ENCODE measurements at regions of chr7 and their contacts with region 1.

Region 1: GRCh38 chr7:74026903-74027551 is 946 bp upstream of the ELN start:
- DNase-seq: peak; percentile 69
- ATAC-seq: peak; percentile 78
- H3K4me3 ChIP-seq: no peak overlapping the region
- H3K4me3 Mint-ChIP-seq: no peak overlapping the region
- H3K27ac ChIP-seq: no peak overlapping the region
- H3K27ac Mint-ChIP-seq: no peak overlapping the region
- H3K4me1 ChIP-seq: peaks cover 11 to 13% of the 10 kb centered on the region in 2 donors
- H3K4me1 Mint-ChIP-seq: peaks cover 7% of the 10 kb centered on the region
- H3K27me3 ChIP-seq: peaks cover 0 to 62% (median 23%) of the 10 kb centered on the region in 4 experiments
- H3K27me3 Mint-ChIP-seq: peaks cover 53% of the 10 kb centered on the region
- CTCF ChIP-seq: peak; percentile 93

Region 2: GRCh38 chr7:73865738-73866445 is 161.1 kb before region 1 on chr7:
- CTCF ChIA-PET with region 1: interaction called, 11 read pairs
- POLR2A ChIA-PET with region 1: no interaction called
- intact Hi-C with region 1: loop called (anchors 2 kb)
- DNase-seq: peak; percentile 34
- ATAC-seq: no peak
- H3K4me3 ChIP-seq: no peak overlapping the region
- H3K4me3 Mint-ChIP-seq: no peak overlapping the region
- H3K27ac ChIP-seq: no peak overlapping the region
- H3K27ac Mint-ChIP-seq: no peak overlapping the region
- H3K4me1 ChIP-seq: no peaks in the 10 kb centered on the region
- H3K4me1 Mint-ChIP-seq: no peaks in the 10 kb centered on the region
- H3K27me3 ChIP-seq: no peaks in the 10 kb centered on the region
- H3K27me3 Mint-ChIP-seq: no peaks in the 10 kb centered on the region
- CTCF ChIP-seq: peak; percentile 29

Region 3: GRCh38 chr7:74013519-74014267 is 13.3 kb before region 1 on chr7:
- CTCF ChIA-PET with region 1: interaction called, 26 read pairs
- POLR2A ChIA-PET with region 1: no interaction called
- intact Hi-C with region 1: no loop called
- DNase-seq: no peak
- ATAC-seq: no peak
- H3K4me3 ChIP-seq: no peak overlapping the region
- H3K4me3 Mint-ChIP-seq: no peak overlapping the region
- H3K27ac ChIP-seq: no peak overlapping the region
- H3K27ac Mint-ChIP-seq: no peak overlapping the region
- H3K4me1 ChIP-seq: peaks cover 0 to 8% of the 10 kb centered on the region in 2 donors
- H3K4me1 Mint-ChIP-seq: peaks cover 6% of the 10 kb centered on the region
- H3K27me3 ChIP-seq: peaks cover 0 to 3% (median 0%) of the 10 kb centered on the region in 4 experiments
- H3K27me3 Mint-ChIP-seq: no peaks in the 10 kb centered on the region
- CTCF ChIP-seq: no peak

Region 4: DNA sequence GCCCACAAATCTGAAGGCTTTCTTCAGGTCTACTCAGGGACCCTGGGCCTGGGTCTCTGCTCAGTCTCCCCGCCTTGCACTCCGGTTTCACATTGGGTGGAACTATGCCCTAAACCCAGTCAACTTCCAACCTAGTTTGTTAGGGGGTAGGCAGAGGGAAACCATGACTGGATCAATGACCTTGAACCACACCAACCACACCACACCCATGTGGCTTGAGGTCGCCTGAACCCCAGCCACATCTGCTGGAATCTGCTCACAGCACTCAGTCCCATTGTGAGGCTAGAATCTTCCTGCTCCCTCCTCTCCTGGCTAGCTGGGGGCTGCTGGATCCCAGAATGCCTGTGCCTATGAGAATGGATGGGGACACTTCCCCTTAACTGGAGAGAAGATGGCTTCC is 209.3 kb after region 1 on chr7:
- CTCF ChIA-PET with region 1: no interaction called
- POLR2A ChIA-PET with region 1: no interaction called
- intact Hi-C with region 1: no loop called
- DNase-seq: no peak
- ATAC-seq: no peak
- H3K4me3 ChIP-seq: no peak overlapping the region
- H3K4me3 Mint-ChIP-seq: no peak overlapping the region
- H3K27ac ChIP-seq: no peak overlapping the region
- H3K27ac Mint-ChIP-seq: peak overlapping the region; percentile 41
- H3K4me1 ChIP-seq: peaks cover 37 to 57% of the 10 kb centered on the region in 2 donors
- H3K4me1 Mint-ChIP-seq: peaks cover 37% of the 10 kb centered on the region
- H3K27me3 ChIP-seq: no peaks in the 10 kb centered on the region
- H3K27me3 Mint-ChIP-seq: no peaks in the 10 kb centered on the region
- CTCF ChIP-seq: no peak

Measured in B cell (primary cell).